Left lung (tissue), 14 donors: ENCODE measurements at regions of chr3 and their contacts with region 1.

Region 1: DNA sequence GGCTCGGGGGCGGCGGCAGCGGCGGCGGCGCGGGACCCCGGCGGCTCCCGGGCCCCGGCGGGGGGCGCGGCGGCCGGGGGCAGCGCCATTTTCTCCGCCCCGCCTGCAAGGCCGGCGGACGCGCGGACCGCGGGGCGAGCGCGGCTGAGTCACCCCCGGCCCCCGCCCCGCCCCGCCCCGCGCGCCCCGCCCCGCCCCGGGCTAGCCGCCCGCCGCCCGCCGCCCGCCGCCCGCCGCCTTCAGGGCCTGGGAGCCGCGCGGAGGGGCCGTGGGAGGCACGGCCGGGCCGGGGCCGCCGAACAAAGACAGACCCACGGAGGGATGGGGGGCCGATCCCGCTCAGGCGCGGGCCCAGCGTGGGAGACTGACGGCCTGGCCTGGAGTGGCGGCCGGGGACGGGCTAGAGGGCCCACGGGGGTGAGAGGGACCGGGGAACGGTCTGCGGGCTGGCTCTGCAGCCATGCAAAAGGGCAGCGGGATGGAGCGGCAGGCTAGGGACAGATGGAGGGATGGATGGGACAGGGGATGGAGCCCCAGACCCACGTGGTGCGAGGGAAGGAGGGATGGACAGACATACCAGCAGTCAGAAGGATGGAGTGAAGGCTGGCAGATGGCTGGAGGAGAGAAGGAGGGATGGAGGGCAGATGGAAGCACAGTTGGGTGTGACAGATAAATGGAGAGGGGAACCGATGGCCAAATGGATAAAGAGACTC is at the start of gene EIF4E3:
- DNase-seq: peak in 2 of 4 donors; percentile 43 to 89
- ATAC-seq: peak; percentile 55
- H3K4me3 ChIP-seq: peak within 1 kb of the TSS; percentile 72 to 82
- H3K27ac ChIP-seq: peak within 1 kb of the TSS; percentile 39 to 90
- H3K4me1 ChIP-seq: peaks cover 0 to 60% of the 10 kb centered on the region in 2 donors
- H3K27me3 ChIP-seq: no peaks in the 10 kb centered on the region
- CTCF ChIP-seq: no peak
- polyA plus RNA-seq, gene EIF4E3: 10.4 to 14.5 (median 12.6) TPM

Region 2: DNA sequence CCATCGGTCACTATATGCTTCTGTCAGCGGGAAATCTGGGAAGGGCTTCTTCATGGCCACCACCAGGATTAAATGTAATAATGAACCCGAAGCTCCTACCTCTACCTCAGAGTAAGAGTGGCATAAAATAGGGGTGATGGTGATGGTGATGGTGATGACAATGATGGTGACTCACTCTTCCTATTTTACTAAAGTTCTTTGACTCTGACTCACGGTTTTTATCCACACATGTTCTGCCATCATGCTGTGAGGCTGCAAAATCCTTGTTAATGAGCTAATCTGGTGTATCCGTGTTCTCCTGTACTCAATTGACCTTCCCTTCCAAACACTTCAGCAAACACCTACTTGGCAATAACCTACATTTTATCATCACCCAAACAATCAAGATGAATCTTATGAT is 123.6 kb before region 1 on chr3:
- intact Hi-C with region 1: no loop called
- DNase-seq: no peak
- ATAC-seq: no peak
- H3K4me3 ChIP-seq: no peak overlapping the region
- H3K27ac ChIP-seq: no peak overlapping the region
- H3K4me1 ChIP-seq: no peaks in the 10 kb centered on the region
- H3K27me3 ChIP-seq: no peaks in the 10 kb centered on the region
- CTCF ChIP-seq: no peak

Region 3: DNA sequence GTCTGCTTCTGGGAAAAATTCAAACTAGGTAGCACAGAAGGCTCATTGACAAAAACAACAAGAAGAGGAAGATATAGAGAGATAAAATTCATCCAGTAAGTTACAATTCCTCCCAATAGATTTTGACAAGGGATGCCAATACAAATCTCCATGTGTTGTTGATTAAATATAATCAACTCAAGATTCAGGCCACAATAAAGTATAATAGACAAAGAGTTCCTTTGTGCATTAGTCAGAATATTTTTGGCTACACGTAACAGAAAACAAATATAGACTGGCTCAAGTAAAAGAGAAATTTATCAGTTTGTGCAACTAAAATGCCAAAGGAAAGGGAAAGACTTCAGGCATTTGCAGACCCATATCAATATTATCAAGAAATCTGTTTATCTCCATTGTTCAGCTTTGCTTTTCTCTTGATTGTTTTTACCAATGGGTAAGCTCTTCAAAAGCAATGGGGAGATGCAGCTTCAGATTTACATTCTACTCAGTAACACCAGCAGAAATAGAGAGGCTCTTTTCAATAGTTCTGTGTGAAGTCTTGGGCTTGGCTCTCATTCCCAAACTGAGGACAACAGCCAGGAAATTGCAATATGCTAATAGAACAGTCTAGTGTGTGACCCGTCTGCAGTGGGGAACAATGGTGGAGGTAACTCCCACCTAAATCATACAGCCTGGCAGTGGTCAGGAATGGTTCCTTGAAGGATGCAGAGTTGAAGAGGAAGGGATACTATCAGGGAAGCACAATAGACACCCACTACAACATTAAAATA is 137.1 kb after region 1 on chr3:
- intact Hi-C with region 1: loop called in 1 of 2 experiments (anchors 10 kb)
- DNase-seq: no peak
- ATAC-seq: no peak
- H3K4me3 ChIP-seq: no peak overlapping the region
- H3K27ac ChIP-seq: no peak overlapping the region
- H3K4me1 ChIP-seq: peaks cover 0 to 16% of the 10 kb centered on the region in 2 donors
- H3K27me3 ChIP-seq: peaks cover 15 to 24% of the 10 kb centered on the region in 2 donors
- CTCF ChIP-seq: no peak

Region 4: GRCh38 chr3:72058493-72059081 is 333.2 kb after region 1 on chr3:
- intact Hi-C with region 1: no loop called
- DNase-seq: no peak
- ATAC-seq: no peak
- H3K4me3 ChIP-seq: no peak overlapping the region
- H3K27ac ChIP-seq: no peak overlapping the region
- H3K4me1 ChIP-seq: no peaks in the 10 kb centered on the region
- H3K27me3 ChIP-seq: no peaks in the 10 kb centered on the region
- CTCF ChIP-seq: no peak